ENCODE measurements at regions of chr1 and their contacts with region 1.

Region 1: DNA sequence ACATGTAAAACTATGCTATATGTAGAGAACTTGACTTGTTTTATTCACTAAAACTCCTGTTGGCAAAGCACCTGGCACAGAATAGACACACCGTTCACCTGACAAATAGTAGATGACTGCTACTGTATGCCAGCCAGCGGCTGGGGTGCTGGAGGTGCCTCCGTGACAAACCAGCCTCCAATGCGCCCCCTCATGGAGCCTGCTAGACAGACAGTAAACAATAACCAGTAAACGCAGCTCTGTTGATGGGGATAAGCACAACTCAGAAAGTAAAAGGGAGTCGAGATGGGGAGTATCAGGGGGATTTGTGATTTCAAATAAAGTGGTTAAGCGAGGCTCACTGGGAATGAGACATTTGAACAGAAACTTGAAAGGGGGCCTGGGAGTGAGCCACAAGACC is 107.2 kb downstream of the PRDM2 start:
- DNase-seq: peak in 2 of 10 donors; percentile 44 to 59
- H3K4me3 ChIP-seq: no peak overlapping the region
- H3K27ac ChIP-seq: peak overlapping the region in 4 of 59 donors; percentile 5 to 41 (median 24)
- H3K27me3 ChIP-seq: no peaks in the 10 kb centered on the region
- CTCF ChIP-seq: peak in 43 of 56 donors; percentile 8 to 60 (median 34)

Region 2: DNA sequence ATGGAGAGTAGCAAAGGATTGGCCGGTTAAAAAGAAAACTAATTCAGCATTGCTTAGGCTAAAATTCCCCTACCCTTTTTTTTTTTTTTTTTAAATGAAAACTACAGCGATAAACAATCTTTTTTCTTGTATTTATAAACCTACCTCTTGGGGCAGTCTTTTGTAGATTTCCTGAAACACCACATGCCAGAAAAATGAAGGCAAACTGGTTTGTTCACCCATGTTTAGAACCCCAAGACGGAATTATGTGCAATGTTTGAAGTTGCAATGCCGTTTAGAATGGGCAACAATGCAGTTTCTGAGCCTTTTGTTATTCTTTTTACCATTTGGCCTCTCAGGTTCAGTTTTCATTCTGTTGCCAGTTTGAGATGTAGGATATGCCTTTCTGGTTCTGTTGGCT is 48.1 kb before region 1 on chr1:
- intact Hi-C with region 1: loop called in 1 of 2 experiments (anchors 5 kb)
- DNase-seq: no peak
- H3K4me3 ChIP-seq: peak overlapping the region in 3 of 59 donors; percentile 2 to 9 (median 6)
- H3K27ac ChIP-seq: peak overlapping the region in 38 of 59 donors; percentile 1 to 87 (median 18)
- H3K27me3 ChIP-seq: no peaks in the 10 kb centered on the region
- CTCF ChIP-seq: peak in 13 of 56 donors; percentile 8 to 37 (median 16)

Region 3: DNA sequence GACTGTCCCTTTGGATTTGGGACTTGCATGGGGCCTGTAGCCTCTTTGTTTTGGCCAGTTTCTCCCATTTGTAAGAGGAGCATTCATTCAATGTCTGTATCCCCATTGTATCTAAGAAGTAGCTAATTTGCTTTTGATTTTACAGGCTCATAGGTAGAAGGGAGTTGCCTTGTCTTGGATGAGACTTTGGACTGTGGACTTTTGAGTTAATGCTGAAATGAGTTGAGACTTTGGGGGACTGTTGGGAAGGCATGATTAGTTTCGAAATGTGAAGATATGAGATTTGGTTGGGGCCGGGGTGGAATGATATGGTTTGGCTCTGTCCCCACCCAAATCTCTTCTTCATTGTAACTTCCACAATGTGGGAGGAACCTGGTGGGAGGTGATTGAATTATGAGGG is 44.5 kb after region 1 on chr1:
- intact Hi-C with region 1: no loop called
- DNase-seq: no peak
- H3K4me3 ChIP-seq: no peak overlapping the region
- H3K27ac ChIP-seq: no peak overlapping the region
- H3K27me3 ChIP-seq: no peaks in the 10 kb centered on the region
- CTCF ChIP-seq: no peak

Region 4: DNA sequence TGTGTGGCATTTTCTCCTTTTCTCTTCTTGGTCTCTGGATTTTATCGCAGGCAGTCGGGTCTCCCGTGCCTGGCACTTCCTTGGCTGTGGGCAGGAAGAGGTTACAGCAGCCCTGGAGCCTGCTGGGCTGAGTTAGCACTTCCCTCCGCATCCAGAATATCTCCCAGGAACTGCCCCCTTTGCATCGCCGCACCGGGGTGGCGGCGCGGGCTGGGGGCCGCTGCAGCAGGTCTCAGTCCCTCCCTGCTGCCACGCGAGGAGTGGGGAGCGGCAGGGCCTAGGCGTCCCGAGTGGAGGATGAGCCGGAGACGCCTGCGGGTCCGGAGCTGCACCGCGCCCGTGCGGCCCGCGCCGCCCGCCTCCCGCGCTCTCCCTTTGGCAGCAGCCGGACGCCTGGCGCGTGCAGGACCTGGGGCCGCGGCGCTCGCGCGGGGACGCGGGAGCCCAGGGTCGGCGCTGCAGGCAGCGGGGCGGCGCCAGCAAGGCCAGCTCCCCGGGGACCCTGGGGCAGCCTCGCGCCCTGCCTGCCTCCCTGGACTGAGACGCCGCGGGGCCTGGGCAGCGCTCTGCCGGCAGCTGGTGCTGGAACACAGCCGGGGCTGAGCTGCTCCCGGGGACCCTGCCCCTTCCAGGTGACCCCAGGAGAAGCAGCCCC is 85.6 kb after region 1 on chr1:
- intact Hi-C with region 1: no loop called
- DNase-seq: peak in 7 of 10 donors; percentile 16 to 55 (median 34)
- H3K4me3 ChIP-seq: peak overlapping the region; percentile 41 to 76 (median 59)
- H3K27ac ChIP-seq: peak overlapping the region in 45 of 59 donors; percentile 12 to 82 (median 57)
- H3K27me3 ChIP-seq: peaks cover 0 to 29% (median 0%) of the 10 kb centered on the region in 45 donors
- CTCF ChIP-seq: no peak